HCT116 (cell line): ENCODE measurements at regions of chr5 and their contacts with region 1.

Region 1: GRCh38 chr5:72611118-72611730 is 104.0 kb upstream of the ZNF366 start:
- DNase-seq: peak; percentile 48
- ATAC-seq: peak; percentile 100
- H3K4me3 ChIP-seq: no peak overlapping the region
- H3K27ac ChIP-seq: no peak overlapping the region
- H3K4me1 ChIP-seq: no peaks in the 10 kb centered on the region
- H3K27me3 ChIP-seq: no peaks in the 10 kb centered on the region
- CTCF ChIP-seq: peak; percentile 69 to 99 (median 94)
- POLR2A ChIP-seq: no peak
- RAD21 ChIP-seq: peak; percentile 76

Region 2: GRCh38 chr5:72600391-72600981 is 10.7 kb before region 1 on chr5:
- CTCF ChIA-PET with region 1: interaction called, 10 read pairs
- POLR2A ChIA-PET with region 1: no interaction called
- RAD21 ChIA-PET with region 1: no interaction called
- intact Hi-C with region 1: no loop called
- DNase-seq: peak; percentile 10
- ATAC-seq: peak; percentile 63
- H3K4me3 ChIP-seq: no peak overlapping the region
- H3K27ac ChIP-seq: no peak overlapping the region
- H3K4me1 ChIP-seq: peaks cover 0 to 26% of the 10 kb centered on the region in 2 experiments; a peak in 2 of 4 replicates
- H3K27me3 ChIP-seq: no peaks in the 10 kb centered on the region
- CTCF ChIP-seq: no peak
- POLR2A ChIP-seq: no peak
- RAD21 ChIP-seq: no peak

Region 3: GRCh38 chr5:72622170-72622760 is 11.0 kb after region 1 on chr5:
- CTCF ChIA-PET with region 1: interaction called, 11 read pairs
- POLR2A ChIA-PET with region 1: no interaction called
- RAD21 ChIA-PET with region 1: no interaction called
- intact Hi-C with region 1: no loop called
- DNase-seq: no peak
- ATAC-seq: no peak
- H3K4me3 ChIP-seq: no peak overlapping the region
- H3K27ac ChIP-seq: no peak overlapping the region
- H3K4me1 ChIP-seq: no peaks in the 10 kb centered on the region
- H3K27me3 ChIP-seq: no peaks in the 10 kb centered on the region
- CTCF ChIP-seq: no peak
- POLR2A ChIP-seq: no peak
- RAD21 ChIP-seq: no peak

Region 4: DNA sequence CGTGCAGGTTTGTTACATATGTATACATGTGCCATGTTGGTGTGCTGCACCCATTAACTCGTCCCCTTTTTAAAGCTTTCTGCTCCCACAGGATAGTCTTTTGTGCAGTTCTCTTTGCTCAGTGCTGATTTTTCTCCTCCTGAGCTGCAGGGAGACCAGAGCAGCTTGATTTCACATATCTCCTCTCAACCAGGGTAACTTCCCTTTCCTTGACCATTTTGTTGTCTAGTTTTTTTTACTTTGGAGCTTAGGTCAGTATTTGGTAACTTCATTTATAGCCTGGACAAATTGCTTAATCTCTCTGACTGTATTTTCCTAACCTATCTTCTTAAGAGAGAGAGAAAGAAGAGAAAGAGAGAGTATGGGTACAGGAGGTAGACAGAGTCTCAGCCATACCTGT is 33.1 kb after region 1 on chr5:
- CTCF ChIA-PET with region 1: no interaction called
- POLR2A ChIA-PET with region 1: no interaction called
- RAD21 ChIA-PET with region 1: no interaction called
- intact Hi-C with region 1: no loop called
- DNase-seq: no peak
- ATAC-seq: no peak
- H3K4me3 ChIP-seq: no peak overlapping the region
- H3K27ac ChIP-seq: no peak overlapping the region
- H3K4me1 ChIP-seq: peaks cover 2 to 8% of the 10 kb centered on the region in 2 experiments; a peak in 2 of 4 replicates
- H3K27me3 ChIP-seq: no peaks in the 10 kb centered on the region
- CTCF ChIP-seq: no peak
- POLR2A ChIP-seq: no peak
- RAD21 ChIP-seq: no peak

Region 5: GRCh38 chr5:72816311-72817145 is 205.3 kb after region 1 on chr5 and contains the start of gene TNPO1:
- CTCF ChIA-PET with region 1: interaction called, 38 read pairs
- POLR2A ChIA-PET with region 1: interaction called, 4 read pairs
- RAD21 ChIA-PET with region 1: interaction called, 6 to 7 read pairs
- intact Hi-C with region 1: loop called (anchors 1 kb)
- DNase-seq: peak; percentile 79
- ATAC-seq: peak; percentile 88
- H3K4me3 ChIP-seq: peak within 1 kb of the TSS; percentile 69 to 71
- H3K27ac ChIP-seq: peak within 1 kb of the TSS; percentile 83
- H3K4me1 ChIP-seq: peaks cover 16 to 23% of the 10 kb centered on the region in 2 experiments; a peak in 3 of 4 replicates
- H3K27me3 ChIP-seq: no peaks in the 10 kb centered on the region
- CTCF ChIP-seq: no peak
- POLR2A ChIP-seq: peak; percentile 70
- RAD21 ChIP-seq: no peak
- total RNA-seq, gene TNPO1: 104 TPM